Endothelial cell of umbilical vein (primary cell): ENCODE measurements at regions of chr2 and their contacts with region 1.

Region 1: DNA sequence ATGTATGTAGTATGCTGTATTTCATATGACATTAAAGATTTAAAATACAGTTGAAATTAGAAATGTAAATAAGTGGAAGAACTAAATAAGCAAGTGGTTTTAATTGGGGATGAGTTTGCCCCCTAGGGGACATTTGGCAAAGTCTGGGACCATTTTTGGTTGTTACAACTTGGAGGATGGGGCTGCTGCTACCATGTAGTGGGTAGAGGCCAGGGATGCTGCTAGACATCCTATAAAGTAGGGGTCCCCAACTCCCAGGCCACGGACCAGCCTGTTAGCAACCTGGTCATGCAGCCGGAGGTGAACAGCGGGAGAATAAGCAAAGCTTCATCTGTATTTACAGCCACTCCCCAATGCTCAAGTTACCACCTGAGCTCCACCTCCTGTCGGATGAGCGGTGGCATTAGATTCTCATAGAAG is 27.9 kb upstream of the ASNSD1 start:
- DNase-seq: peak; percentile 49
- H3K4me3 ChIP-seq: no peak overlapping the region
- H3K27ac ChIP-seq: no peak overlapping the region
- H3K4me1 ChIP-seq: peaks cover 4% of the 10 kb centered on the region
- H3K27me3 ChIP-seq: no peaks in the 10 kb centered on the region
- CTCF ChIP-seq: peak; percentile 16 to 32
- POLR2A ChIP-seq: no peak

Region 2: DNA sequence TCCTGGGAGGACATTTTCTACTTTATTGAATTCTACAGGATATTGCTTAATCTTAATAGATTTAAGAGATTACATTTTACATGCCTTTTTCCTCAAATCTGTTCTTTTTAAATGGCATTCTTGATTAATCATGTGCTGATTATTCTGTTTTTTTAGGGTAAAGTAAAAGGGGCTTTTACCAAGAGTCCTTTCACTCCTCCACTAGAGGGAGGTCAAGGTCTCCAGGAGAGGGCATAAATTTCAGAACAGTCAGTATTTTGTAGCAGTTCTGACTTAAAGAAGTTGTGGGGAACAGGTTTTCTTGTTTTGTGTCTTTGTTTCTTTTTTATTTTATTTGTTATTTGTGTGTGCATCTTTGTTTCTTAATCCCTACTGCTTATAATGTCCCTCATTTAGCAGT is 166.7 kb before region 1 on chr2:
- CTCF ChIA-PET with region 1: interaction called, 5 read pairs
- POLR2A ChIA-PET with region 1: no interaction called
- dilution Hi-C with region 1: no loop called
- intact Hi-C with region 1: loop called (anchors 1 kb)
- DNase-seq: peak; percentile 60
- H3K4me3 ChIP-seq: no peak overlapping the region
- H3K27ac ChIP-seq: no peak overlapping the region
- H3K4me1 ChIP-seq: no peaks in the 10 kb centered on the region
- H3K27me3 ChIP-seq: no peaks in the 10 kb centered on the region
- CTCF ChIP-seq: peak; percentile 28 to 56
- POLR2A ChIP-seq: no peak

Region 3: GRCh38 chr2:189592353-189592984 is 40.9 kb before region 1 on chr2:
- CTCF ChIA-PET with region 1: no interaction called
- POLR2A ChIA-PET with region 1: no interaction called
- dilution Hi-C with region 1: no loop called
- intact Hi-C with region 1: no loop called
- DNase-seq: peak; percentile 26
- H3K4me3 ChIP-seq: no peak overlapping the region
- H3K27ac ChIP-seq: no peak overlapping the region
- H3K4me1 ChIP-seq: peaks cover 3% of the 10 kb centered on the region
- H3K27me3 ChIP-seq: no peaks in the 10 kb centered on the region
- CTCF ChIP-seq: no peak
- POLR2A ChIP-seq: no peak